BJ (cell line): ENCODE measurements at regions of chr1 and their contacts with region 1.

Region 1: DNA sequence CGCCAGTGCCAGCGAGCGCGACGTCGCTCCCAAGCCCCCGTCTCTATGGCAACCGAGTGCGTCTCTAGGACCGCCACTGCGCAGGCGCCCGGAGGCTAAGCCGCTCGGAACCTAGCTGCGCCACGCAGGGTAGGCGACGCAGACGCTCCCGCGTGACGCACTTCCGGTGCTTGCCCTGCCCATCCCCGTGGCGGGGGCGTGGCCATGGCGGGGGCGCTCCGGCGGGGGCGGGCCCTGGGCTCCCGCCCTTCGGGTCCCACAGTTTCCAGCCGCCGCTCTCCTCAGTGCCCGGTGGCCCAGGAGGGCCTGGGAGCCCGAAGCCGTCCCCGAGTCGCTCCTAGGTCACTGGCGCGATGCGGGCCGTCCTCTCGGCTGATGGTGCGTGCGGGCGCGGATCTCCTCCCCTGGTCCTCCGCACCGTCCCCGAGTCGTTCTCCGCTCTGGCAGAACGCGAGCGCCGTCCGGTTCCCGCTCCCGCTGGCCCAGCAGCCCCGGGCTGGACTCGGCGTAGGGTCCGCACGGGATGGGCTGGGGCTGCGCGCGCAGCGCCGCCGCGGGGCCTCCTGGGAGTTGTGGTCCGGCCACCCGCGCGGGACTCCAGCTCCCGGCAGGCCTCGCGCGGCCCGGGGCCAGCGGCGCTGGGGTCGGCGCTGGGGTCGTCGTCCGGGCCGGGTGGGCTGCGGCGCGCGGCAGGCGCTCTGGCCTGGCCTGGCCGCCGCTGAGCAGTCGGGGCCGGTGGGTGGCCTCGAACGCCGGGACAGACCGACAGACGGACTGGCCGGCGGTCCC is at the start of gene MIB2:
- DNase-seq: peak; percentile 59
- H3K4me3 ChIP-seq: peak within 1 kb of the TSS; percentile 100
- H3K27me3 ChIP-seq: no peaks in the 10 kb centered on the region
- CTCF ChIP-seq: no peak
- polyA plus RNA-seq, gene MIB2: 14.8 and 23.1 TPM in 2 replicates

Region 2: GRCh38 chr1:1602968-1603506 is 12.4 kb before region 1 on chr1:
- CTCF ChIA-PET with region 1: interaction called, 13 read pairs
- POLR2A ChIA-PET with region 1: no interaction called
- DNase-seq: no peak
- H3K4me3 ChIP-seq: no peak overlapping the region
- H3K27me3 ChIP-seq: peaks cover 2% of the 10 kb centered on the region; the same call in 1 of the 2 replicates
- CTCF ChIP-seq: no peak